CD4-positive, alpha-beta T cell (primary cell): ENCODE measurements at regions of chr15 and their contacts with region 1.

Region 1: DNA sequence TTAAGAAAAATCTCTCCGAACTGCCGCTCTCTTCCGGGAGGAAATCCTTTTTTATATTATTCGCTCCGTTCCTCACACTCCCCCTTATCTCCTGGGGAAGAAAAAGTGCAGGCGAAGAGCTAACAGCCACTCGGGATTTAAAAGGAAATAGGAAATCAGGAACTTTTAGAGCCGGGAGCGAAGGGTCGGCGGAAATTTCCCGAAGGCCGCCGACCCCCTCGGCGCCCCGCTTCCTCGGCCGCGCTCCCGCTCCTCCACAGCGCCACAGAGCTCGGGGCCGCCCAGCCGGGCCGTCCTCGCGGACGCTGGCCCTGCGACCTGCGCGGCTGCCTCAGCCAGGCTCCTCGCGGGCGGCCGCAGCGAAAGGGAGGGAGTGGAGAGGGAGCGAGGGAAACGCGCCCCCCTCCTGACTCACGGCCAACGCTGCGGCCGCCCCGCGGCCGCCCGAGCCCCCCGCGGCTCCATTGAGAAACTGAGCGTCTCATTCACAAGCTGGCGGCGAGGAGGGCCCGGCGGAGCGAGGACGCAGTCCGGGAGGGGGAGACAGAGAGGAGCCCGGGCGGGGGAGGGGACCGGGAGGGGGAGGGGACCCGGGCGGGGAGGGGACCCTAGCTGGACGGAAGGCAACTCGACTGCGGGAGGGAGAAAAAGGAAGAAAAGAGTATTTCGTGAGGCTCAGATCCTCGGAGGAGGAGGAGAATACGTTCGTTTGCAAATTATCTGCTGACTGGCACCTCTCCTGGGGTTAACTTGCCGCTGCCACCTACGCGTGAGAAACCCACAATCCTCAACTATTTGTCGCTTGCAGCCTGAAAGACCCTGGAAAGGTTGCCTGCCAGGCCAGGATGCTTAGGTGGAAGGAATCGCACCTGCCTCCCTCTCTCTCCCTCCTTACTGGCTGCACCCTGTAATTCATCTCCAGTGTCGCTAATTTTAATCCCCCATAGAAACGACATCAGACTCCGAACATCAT is at the start of gene PTPN9:
- DNase-seq: peak; percentile 46 to 82 (median 64)
- ATAC-seq: peak; percentile 82
- H3K4me3 ChIP-seq: peak within 1 kb of the TSS; percentile 79
- H3K4me3 Mint-ChIP-seq: peak within 1 kb of the TSS; percentile 97
- H3K27ac ChIP-seq: peak within 1 kb of the TSS; percentile 50 to 70
- H3K27ac Mint-ChIP-seq: peak within 1 kb of the TSS; percentile 82
- H3K4me1 ChIP-seq: peaks cover 22% of the 10 kb centered on the region
- H3K4me1 Mint-ChIP-seq: peaks cover 26% of the 10 kb centered on the region
- H3K27me3 ChIP-seq: no peaks in the 10 kb centered on the region
- H3K27me3 Mint-ChIP-seq: no peaks in the 10 kb centered on the region
- CTCF ChIP-seq: peak; percentile 66
- total RNA-seq, gene PTPN9: 8.1 to 8.2 TPM

Region 2: GRCh38 chr15:75597667-75598341 is 18.6 kb after region 1 on chr15:
- CTCF ChIA-PET with region 1: interaction called, 12 read pairs
- POLR2A ChIA-PET with region 1: interaction called, 7 read pairs
- intact Hi-C with region 1: no loop called
- DNase-seq: peak in 8 of 14 experiments; percentile 10 to 62 (median 37)
- ATAC-seq: peak; percentile 32
- H3K4me3 ChIP-seq: no peak overlapping the region
- H3K4me3 Mint-ChIP-seq: no peak overlapping the region
- H3K27ac ChIP-seq: no peak overlapping the region
- H3K27ac Mint-ChIP-seq: no peak overlapping the region
- H3K4me1 ChIP-seq: peaks cover 17% of the 10 kb centered on the region
- H3K4me1 Mint-ChIP-seq: peaks cover 19% of the 10 kb centered on the region
- H3K27me3 ChIP-seq: no peaks in the 10 kb centered on the region
- H3K27me3 Mint-ChIP-seq: no peaks in the 10 kb centered on the region
- CTCF ChIP-seq: peak; percentile 53

Region 3: GRCh38 chr15:75606711-75607699 is 27.8 kb after region 1 on chr15:
- CTCF ChIA-PET with region 1: interaction called, 3 read pairs
- POLR2A ChIA-PET with region 1: interaction called, 29 read pairs
- intact Hi-C with region 1: loop called in 1 of 2 experiments (anchors 2 kb)
- DNase-seq: peak in 8 of 14 experiments; percentile 6 to 77 (median 24)
- ATAC-seq: peak; percentile 75
- H3K4me3 ChIP-seq: peak overlapping the region; percentile 34
- H3K4me3 Mint-ChIP-seq: peak overlapping the region; percentile 68
- H3K27ac ChIP-seq: peak overlapping the region; percentile 44 to 63
- H3K27ac Mint-ChIP-seq: peak overlapping the region; percentile 76
- H3K4me1 ChIP-seq: peaks cover 48% of the 10 kb centered on the region
- H3K4me1 Mint-ChIP-seq: peaks cover 45% of the 10 kb centered on the region
- H3K27me3 ChIP-seq: no peaks in the 10 kb centered on the region
- H3K27me3 Mint-ChIP-seq: no peaks in the 10 kb centered on the region
- CTCF ChIP-seq: no peak